HCT116 (cell line): ENCODE measurements at regions of chr5 and their contacts with region 1.

Region 1: GRCh38 chr5:69317391-69317790 is 15.2 kb downstream of the CCDC125 start:
- DNase-seq: no peak
- ATAC-seq: no peak
- H3K4me3 ChIP-seq: no peak overlapping the region
- H3K27ac ChIP-seq: no peak overlapping the region
- H3K4me1 ChIP-seq: no peaks in the 10 kb centered on the region
- H3K27me3 ChIP-seq: no peaks in the 10 kb centered on the region
- CTCF ChIP-seq: no peak
- POLR2A ChIP-seq: no peak
- RAD21 ChIP-seq: no peak

Region 2: GRCh38 chr5:69129413-69129812 is 188.0 kb before region 1 on chr5:
- CTCF ChIA-PET with region 1: no interaction called
- POLR2A ChIA-PET with region 1: no interaction called
- RAD21 ChIA-PET with region 1: no interaction called
- intact Hi-C with region 1: loop called (anchors 10 kb)
- DNase-seq: no peak
- ATAC-seq: no peak
- H3K4me3 ChIP-seq: no peak overlapping the region
- H3K27ac ChIP-seq: no peak overlapping the region
- H3K4me1 ChIP-seq: no peaks in the 10 kb centered on the region
- H3K27me3 ChIP-seq: no peaks in the 10 kb centered on the region
- CTCF ChIP-seq: no peak
- POLR2A ChIP-seq: no peak
- RAD21 ChIP-seq: no peak